ENCODE measurements at regions of chr6 and their contacts with region 1.

Region 1: GRCh38 chr6:108250240-108250866 is 10.5 kb downstream of the SNX3 start:
- DNase-seq: no peak
- ATAC-seq: no peak
- H3K4me3 ChIP-seq: no peak overlapping the region
- H3K27ac ChIP-seq: no peak overlapping the region
- H3K4me1 ChIP-seq: peaks cover 35% of the 10 kb centered on the region
- H3K27me3 ChIP-seq: no peaks in the 10 kb centered on the region
- CTCF ChIP-seq: no peak

Region 2: DNA sequence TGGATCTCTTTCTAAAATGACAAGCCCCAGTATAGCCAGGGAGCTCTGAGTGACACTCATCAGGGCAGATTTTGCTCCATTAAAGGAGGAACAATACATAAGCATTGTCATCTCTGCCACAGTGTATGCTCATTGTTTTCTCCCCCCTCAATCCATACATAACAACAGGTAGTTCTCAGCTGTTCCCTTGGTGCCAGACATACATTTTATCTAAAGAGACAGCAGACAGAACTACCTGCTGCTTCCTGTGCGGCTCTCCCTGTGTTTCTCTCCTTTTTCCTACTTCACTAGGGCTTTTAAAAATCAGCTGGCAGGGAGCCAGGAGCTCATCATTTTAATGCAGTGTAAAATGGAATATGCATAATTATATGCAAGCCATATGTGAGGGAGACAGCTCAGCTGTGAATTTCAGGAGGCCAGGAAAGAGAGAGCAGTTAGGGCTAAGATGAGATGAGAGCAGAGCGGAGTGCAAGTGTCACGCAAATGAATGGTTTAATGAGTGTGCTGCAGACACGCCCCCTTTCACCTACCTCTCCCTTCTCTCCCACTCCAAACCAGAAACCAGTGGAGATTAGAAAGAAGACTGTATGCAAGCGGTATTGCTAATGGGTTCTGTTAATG is 664.4 kb before region 1 on chr6:
- intact Hi-C with region 1: no loop called
- DNase-seq: no peak
- ATAC-seq: peak in 1 of 4 donors; percentile 41
- H3K4me3 ChIP-seq: no peak overlapping the region
- H3K27ac ChIP-seq: no peak overlapping the region
- H3K4me1 ChIP-seq: peaks cover 17% of the 10 kb centered on the region
- H3K27me3 ChIP-seq: no peaks in the 10 kb centered on the region
- CTCF ChIP-seq: no peak

Region 3: DNA sequence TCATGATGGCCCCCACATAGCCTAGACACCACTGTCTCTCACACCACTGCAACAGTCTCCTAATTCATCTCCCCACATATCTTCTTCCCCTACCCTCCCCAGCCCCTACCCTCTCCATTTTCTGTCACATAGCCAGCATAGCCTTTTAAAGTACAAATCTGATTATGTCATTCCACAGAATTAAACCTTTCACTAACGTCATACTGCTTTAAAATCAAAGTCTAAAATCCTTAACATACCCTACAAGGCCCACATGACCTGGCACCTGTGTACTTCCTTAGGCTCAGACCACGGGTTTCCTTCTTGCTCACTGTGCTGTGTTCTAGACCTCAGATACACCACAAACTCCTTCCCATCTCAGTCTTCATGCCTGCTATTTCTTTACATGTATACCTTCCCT is 181.7 kb before region 1 on chr6:
- intact Hi-C with region 1: no loop called
- DNase-seq: no peak
- ATAC-seq: no peak
- H3K4me3 ChIP-seq: no peak overlapping the region
- H3K27ac ChIP-seq: no peak overlapping the region
- H3K4me1 ChIP-seq: peaks cover 2% of the 10 kb centered on the region
- H3K27me3 ChIP-seq: no peaks in the 10 kb centered on the region
- CTCF ChIP-seq: no peak

Region 4: GRCh38 chr6:108492131-108492766 is 241.9 kb after region 1 on chr6:
- intact Hi-C with region 1: loop called (anchors 10 kb)
- DNase-seq: no peak
- ATAC-seq: peak; percentile 64 to 85 (median 66)
- H3K4me3 ChIP-seq: no peak overlapping the region
- H3K27ac ChIP-seq: no peak overlapping the region
- H3K4me1 ChIP-seq: no peaks in the 10 kb centered on the region
- H3K27me3 ChIP-seq: no peaks in the 10 kb centered on the region
- CTCF ChIP-seq: peak; percentile 57